ENCODE measurements at regions of chr1 and their contacts with region 1.

Region 1: DNA sequence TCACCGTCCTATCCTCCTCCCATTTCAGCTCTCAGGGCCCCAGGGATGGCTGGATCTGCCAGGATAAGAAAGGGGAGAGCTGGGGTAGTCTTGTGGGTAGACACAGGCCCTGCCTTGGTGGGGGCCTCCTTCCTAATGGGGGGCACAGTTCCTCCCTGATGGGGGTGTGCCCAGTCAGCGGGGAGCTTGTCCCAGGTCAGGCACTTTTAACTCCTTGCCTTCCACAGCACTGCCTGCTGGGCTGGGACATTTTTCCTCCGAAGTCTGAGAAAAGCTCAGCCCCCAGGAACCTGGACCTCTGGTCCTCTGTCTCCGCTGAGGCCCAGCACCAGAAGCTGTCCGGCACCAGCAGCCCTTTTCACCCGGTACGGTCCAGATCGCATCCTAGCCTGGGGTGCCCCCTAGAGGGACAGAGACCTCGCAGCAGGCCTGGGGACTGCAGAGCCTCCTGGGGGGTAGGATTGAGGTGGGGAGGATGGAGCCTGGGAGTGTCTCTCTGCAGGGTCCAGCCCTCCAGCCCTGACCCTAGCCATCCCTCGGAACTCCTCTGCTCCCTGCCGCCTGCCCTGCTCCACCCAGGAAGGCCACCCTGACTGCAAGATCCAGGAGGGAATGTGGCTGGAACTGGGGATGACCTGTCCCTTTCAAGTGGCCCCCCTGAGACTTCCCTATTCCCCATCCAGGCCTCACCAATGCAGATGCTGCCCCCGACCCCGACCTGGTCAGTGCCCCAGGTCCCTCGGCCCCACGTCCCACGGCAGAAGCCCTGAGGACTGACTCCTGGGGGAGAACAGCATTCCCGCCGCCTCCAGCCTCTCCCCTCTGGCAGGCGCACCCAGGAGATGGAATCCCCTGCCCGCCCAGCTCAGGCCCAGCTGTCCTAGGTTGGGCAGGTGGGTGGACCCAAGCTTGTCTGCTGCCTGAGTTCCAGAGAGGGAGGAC is 12.0 kb downstream of the MIIP start:
- DNase-seq: peak; percentile 47
- ATAC-seq: peak; percentile 58
- H3K4me3 ChIP-seq: no peak overlapping the region
- H3K4me3 Mint-ChIP-seq: no peak overlapping the region
- H3K27ac ChIP-seq: no peak overlapping the region
- H3K27ac Mint-ChIP-seq: no peak overlapping the region
- H3K4me1 ChIP-seq: peaks cover 4 to 10% of the 10 kb centered on the region in 2 donors
- H3K4me1 Mint-ChIP-seq: peaks cover 16% of the 10 kb centered on the region
- H3K27me3 ChIP-seq: no peaks in the 10 kb centered on the region
- H3K27me3 Mint-ChIP-seq: no peaks in the 10 kb centered on the region
- CTCF ChIP-seq: peak; percentile 64

Region 2: GRCh38 chr1:11851180-11851579 is 180.1 kb before region 1 on chr1:
- CTCF ChIA-PET with region 1: no interaction called
- POLR2A ChIA-PET with region 1: no interaction called
- intact Hi-C with region 1: no loop called
- DNase-seq: no peak
- ATAC-seq: no peak
- H3K4me3 ChIP-seq: no peak overlapping the region
- H3K4me3 Mint-ChIP-seq: no peak overlapping the region
- H3K27ac ChIP-seq: no peak overlapping the region
- H3K27ac Mint-ChIP-seq: no peak overlapping the region
- H3K4me1 ChIP-seq: no peaks in the 10 kb centered on the region
- H3K4me1 Mint-ChIP-seq: no peaks in the 10 kb centered on the region
- H3K27me3 ChIP-seq: peaks cover 0 to 5% (median 0%) of the 10 kb centered on the region in 4 experiments
- H3K27me3 Mint-ChIP-seq: no peaks in the 10 kb centered on the region
- CTCF ChIP-seq: no peak

Region 3: DNA sequence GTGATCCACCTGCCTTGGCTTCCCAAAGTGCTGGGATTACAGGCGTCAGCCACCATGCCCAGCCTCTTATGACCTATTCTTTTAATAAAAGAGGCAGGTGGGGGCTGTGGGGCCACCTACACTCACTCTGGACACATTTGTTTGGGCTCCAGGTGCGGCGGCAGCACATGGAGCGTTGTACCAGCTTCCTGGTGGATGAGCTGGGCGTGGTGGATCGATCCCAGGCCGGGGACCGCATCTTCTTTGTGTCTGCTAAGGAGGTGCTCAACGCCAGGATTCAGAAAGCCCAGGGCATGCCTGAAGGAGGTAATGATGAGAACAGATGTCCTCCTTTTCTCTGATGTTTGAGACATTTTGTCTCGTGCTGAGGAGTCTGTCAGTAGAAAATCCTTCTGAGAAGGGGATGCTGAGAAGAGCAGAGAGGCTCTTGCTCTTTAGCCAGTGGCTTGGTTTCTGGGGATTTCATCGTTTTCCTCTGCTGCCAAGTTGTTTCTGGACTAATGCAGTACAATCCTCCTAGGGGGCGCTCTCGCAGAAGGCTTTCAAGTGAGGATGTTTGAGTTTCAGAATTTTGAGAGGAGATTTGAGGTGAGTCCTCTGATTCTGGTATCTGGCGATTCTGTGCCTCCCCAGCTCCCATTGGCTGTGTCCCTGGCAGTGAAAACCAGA is 29.9 kb before region 1 on chr1:
- CTCF ChIA-PET with region 1: interaction called, 9 read pairs
- POLR2A ChIA-PET with region 1: no interaction called
- intact Hi-C with region 1: loop called (anchors 2 kb)
- DNase-seq: peak; percentile 48
- ATAC-seq: no peak
- H3K4me3 ChIP-seq: no peak overlapping the region
- H3K4me3 Mint-ChIP-seq: no peak overlapping the region
- H3K27ac ChIP-seq: no peak overlapping the region
- H3K27ac Mint-ChIP-seq: no peak overlapping the region
- H3K4me1 ChIP-seq: no peaks in the 10 kb centered on the region
- H3K4me1 Mint-ChIP-seq: peaks cover 4% of the 10 kb centered on the region
- H3K27me3 ChIP-seq: no peaks in the 10 kb centered on the region
- H3K27me3 Mint-ChIP-seq: no peaks in the 10 kb centered on the region
- CTCF ChIP-seq: peak; percentile 63

Measured in B cell (primary cell).